ENCODE measurements at regions of chr3 and their contacts with region 1.

Region 1: DNA sequence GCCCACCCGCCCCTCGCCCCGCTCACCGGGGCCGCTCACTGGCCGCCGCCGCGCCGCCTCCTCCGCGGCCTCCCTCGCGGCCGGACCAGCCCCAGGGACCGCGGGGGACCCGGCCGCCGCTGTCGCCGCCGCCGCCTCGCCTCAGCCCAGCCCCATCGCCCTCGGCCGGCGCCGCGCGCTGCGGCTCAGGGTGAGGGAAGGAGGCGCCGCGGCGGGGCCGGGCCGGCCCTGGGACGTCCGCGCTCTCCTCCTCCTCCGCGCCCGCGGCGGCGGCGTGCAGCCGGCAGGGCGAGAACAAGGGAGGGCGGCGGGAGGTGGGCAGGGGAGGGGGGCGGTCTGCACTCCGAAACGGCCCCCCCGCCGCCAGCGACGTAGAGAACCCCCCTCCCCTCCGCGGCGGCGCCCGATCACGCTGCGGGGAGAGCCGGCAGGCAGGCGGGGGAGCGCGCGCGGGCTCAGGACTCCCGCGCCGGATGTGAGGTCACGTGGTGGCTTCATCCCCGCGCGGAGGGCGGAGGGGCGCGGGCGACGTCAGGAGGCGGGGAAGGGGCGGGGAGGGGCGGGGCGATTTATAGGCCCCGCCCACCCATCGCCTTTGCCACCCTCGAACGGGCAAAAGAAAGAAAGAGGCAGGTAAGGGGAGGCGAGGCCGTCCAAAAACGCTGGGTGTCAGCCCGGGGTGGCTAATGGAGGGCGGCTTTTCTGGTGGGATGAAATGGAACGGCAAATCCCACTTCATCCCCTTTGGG is at the start of gene ATP13A3:
- DNase-seq: peak; percentile 95
- ATAC-seq: peak; percentile 81
- H3K4me3 ChIP-seq: peak within 1 kb of the TSS; percentile 63 to 92 (median 77)
- H3K4me3 Mint-ChIP-seq: peak within 1 kb of the TSS; percentile 93
- H3K27ac ChIP-seq: peak within 1 kb of the TSS; percentile 66 to 71
- H3K27ac Mint-ChIP-seq: peak within 1 kb of the TSS; percentile 92
- H3K4me1 ChIP-seq: peaks cover 32 to 50% of the 10 kb centered on the region in 2 donors
- H3K4me1 Mint-ChIP-seq: peaks cover 55% of the 10 kb centered on the region
- H3K27me3 ChIP-seq: no peaks in the 10 kb centered on the region
- H3K27me3 Mint-ChIP-seq: no peaks in the 10 kb centered on the region
- CTCF ChIP-seq: peak; percentile 5
- total RNA-seq, gene ATP13A3: 61.0 and 61.1 TPM in 2 replicates

Region 2: DNA sequence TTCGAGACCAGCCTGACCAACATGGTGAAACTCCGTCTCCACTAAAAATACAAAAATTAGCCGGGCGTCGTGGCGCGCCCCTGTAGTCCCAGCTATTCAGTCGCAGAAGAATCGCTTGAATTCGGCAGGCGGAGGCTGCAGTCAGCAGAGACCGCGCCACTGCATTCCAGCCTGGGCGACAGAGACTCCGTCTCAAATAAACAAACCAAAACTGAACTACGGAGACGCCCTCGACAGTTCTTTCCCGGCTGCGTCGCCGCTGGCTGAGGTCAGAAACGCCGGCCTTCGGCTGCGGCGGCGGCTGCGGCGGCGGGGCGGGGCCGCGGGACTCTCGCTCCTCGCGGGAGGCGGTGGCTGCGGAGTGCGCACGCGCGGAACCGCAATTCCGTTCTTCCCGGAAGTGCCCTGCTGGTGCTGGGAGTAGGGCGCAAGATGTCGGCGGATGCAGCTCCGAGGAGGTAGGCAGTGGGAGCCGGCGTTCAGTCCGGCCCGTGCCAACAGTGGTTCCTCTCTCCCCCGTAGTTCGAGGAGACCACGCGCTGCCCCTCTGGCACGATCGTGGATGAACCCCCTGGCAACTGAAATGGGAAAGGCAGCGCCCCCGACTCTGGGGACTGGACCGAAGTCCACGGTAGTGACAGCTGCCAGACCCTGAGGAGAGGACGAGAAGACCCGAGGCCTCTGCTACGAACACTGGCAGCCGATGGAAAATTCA is 97.0 kb after region 1 on chr3:
- CTCF ChIA-PET with region 1: no interaction called
- POLR2A ChIA-PET with region 1: interaction called, 5 read pairs
- intact Hi-C with region 1: loop called (anchors 1 kb)
- DNase-seq: peak; percentile 95
- ATAC-seq: peak; percentile 93
- H3K4me3 ChIP-seq: peak overlapping the region; percentile 81 to 98 (median 91)
- H3K4me3 Mint-ChIP-seq: peak overlapping the region; percentile 97
- H3K27ac ChIP-seq: peak overlapping the region; percentile 86 to 88
- H3K27ac Mint-ChIP-seq: peak overlapping the region; percentile 98
- H3K4me1 ChIP-seq: peaks cover 9% of the 10 kb centered on the region in 2 donors
- H3K4me1 Mint-ChIP-seq: peaks cover 21% of the 10 kb centered on the region
- H3K27me3 ChIP-seq: no peaks in the 10 kb centered on the region
- H3K27me3 Mint-ChIP-seq: no peaks in the 10 kb centered on the region
- CTCF ChIP-seq: no peak

Region 3: GRCh38 chr3:194632809-194633348 is 146.2 kb after region 1 on chr3:
- CTCF ChIA-PET with region 1: no interaction called
- POLR2A ChIA-PET with region 1: no interaction called
- intact Hi-C with region 1: loop called (anchors 2 kb)
- DNase-seq: no peak
- ATAC-seq: peak; percentile 51
- H3K4me3 ChIP-seq: peak overlapping the region; percentile 30 to 79 (median 58)
- H3K4me3 Mint-ChIP-seq: peak overlapping the region; percentile 86
- H3K27ac ChIP-seq: no peak overlapping the region
- H3K27ac Mint-ChIP-seq: peak overlapping the region; percentile 56
- H3K4me1 ChIP-seq: peaks cover 4 to 5% of the 10 kb centered on the region in 2 donors
- H3K4me1 Mint-ChIP-seq: peaks cover 9% of the 10 kb centered on the region
- H3K27me3 ChIP-seq: no peaks in the 10 kb centered on the region
- H3K27me3 Mint-ChIP-seq: no peaks in the 10 kb centered on the region
- CTCF ChIP-seq: no peak

Region 4: DNA sequence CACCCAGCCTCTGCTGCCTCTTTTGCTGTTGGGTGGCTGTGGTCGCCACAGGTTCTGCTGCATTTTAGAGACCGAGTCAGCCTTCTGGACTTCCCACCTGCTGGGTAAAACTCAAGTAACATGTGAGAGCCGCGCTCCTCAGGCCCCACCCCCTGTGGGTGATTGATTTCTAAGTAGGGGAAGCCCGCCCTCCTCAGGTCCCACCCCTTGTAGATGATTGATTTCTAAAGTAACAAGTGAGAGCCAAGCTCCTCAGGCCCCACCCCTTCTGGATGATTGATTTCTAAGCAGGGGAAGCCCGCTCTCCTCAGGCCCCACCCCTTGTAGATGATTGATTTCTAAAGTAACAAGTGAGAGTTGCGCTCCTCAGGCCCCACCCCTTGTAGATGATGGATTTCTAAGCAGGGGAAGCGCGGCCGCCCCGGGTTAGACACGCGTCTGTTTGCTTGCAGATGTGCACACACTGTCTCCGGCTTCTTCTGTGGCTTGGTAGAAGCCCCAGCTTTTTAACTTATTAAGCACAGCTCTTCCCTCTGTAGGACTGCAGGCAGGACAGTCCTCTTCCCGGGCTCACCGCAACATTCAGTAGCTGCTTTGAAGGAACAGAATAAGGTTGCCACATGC is 282.4 kb after region 1 on chr3:
- CTCF ChIA-PET with region 1: no interaction called
- POLR2A ChIA-PET with region 1: no interaction called
- intact Hi-C with region 1: loop called (anchors 2 kb)
- DNase-seq: peak; percentile 97
- ATAC-seq: peak; percentile 97
- H3K4me3 ChIP-seq: peak overlapping the region; percentile 40 to 75 (median 55)
- H3K4me3 Mint-ChIP-seq: peak overlapping the region; percentile 85
- H3K27ac ChIP-seq: peak overlapping the region; percentile 52 to 77
- H3K27ac Mint-ChIP-seq: peak overlapping the region; percentile 83
- H3K4me1 ChIP-seq: peaks cover 19 to 29% of the 10 kb centered on the region in 2 donors
- H3K4me1 Mint-ChIP-seq: peaks cover 29% of the 10 kb centered on the region
- H3K27me3 ChIP-seq: peaks cover 0 to 2% (median 0%) of the 10 kb centered on the region in 4 experiments
- H3K27me3 Mint-ChIP-seq: peaks cover 14% of the 10 kb centered on the region
- CTCF ChIP-seq: no peak

Region 5: GRCh38 chr3:195259475-195260279 is 773.0 kb after region 1 on chr3:
- CTCF ChIA-PET with region 1: no interaction called
- POLR2A ChIA-PET with region 1: no interaction called
- intact Hi-C with region 1: loop called (anchors 2 kb)
- DNase-seq: peak; percentile 95
- ATAC-seq: peak; percentile 90
- H3K4me3 ChIP-seq: peak overlapping the region in 4 of 5 experiments; percentile 63 to 89 (median 72)
- H3K4me3 Mint-ChIP-seq: peak overlapping the region; percentile 74
- H3K27ac ChIP-seq: peak overlapping the region; percentile 78 to 87
- H3K27ac Mint-ChIP-seq: peak overlapping the region; percentile 92
- H3K4me1 ChIP-seq: peaks cover 16 to 23% of the 10 kb centered on the region in 2 donors
- H3K4me1 Mint-ChIP-seq: peaks cover 19% of the 10 kb centered on the region
- H3K27me3 ChIP-seq: no peaks in the 10 kb centered on the region
- H3K27me3 Mint-ChIP-seq: no peaks in the 10 kb centered on the region
- CTCF ChIP-seq: peak; percentile 73

Region 6: GRCh38 chr3:195442573-195443390 is 956.1 kb after region 1 on chr3 and contains the start of gene ACAP2:
- CTCF ChIA-PET with region 1: no interaction called
- POLR2A ChIA-PET with region 1: no interaction called
- intact Hi-C with region 1: loop called (anchors 5 kb)
- DNase-seq: peak; percentile 99
- ATAC-seq: peak; percentile 87
- H3K4me3 ChIP-seq: peak within 1 kb of the TSS; percentile 69 to 92 (median 84)
- H3K4me3 Mint-ChIP-seq: peak within 1 kb of the TSS; percentile 94
- H3K27ac ChIP-seq: peak within 1 kb of the TSS; percentile 83 to 88
- H3K27ac Mint-ChIP-seq: peak within 1 kb of the TSS; percentile 97
- H3K4me1 ChIP-seq: peaks cover 29 to 33% of the 10 kb centered on the region in 2 donors
- H3K4me1 Mint-ChIP-seq: peaks cover 40% of the 10 kb centered on the region
- H3K27me3 ChIP-seq: no peaks in the 10 kb centered on the region
- H3K27me3 Mint-ChIP-seq: no peaks in the 10 kb centered on the region
- CTCF ChIP-seq: no peak
- total RNA-seq, gene ACAP2: 108 and 113 TPM in 2 replicates

Region 7: DNA sequence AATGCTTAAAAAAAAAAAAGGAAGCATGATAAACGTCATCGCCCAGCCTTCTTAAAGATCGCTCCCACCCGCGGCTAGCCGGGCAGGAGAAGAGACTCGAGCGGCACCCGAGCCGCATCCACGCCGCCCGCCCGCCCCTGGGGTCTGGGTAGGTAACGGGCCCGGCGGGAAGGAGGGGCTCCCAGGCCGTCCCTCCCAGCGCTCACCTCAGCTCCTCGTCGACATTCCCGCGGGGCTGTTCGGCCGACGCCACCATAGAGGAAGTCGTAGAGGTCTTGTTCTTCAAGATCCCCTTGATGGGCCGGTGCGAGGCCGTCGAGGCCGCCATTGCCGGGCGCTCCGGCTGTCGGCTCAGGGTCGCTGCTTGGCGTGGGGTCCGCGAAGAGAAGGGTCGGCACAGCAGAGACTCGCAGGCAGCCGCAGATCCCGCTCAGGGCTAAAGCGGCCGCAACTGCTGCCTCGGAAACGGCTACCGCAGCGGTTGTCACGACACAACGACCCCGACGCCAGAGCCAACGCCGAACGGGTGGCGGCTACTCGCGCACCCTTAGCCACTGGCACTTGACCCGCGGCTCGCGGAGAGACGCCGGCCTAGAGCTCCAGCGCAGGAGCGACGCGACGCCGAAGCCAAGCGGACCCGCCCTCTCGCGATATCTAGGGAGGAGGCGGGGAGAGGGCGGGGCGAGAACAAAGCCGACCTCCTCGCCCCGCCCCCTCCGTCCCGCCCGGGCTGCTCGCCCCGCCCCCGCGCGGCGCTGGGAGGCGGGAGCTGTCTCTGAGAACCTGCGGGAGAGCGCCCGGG is 1056.2 kb after region 1 on chr3 and contains the start of gene PPP1R2:
- CTCF ChIA-PET with region 1: no interaction called
- POLR2A ChIA-PET with region 1: interaction called, 4 read pairs
- intact Hi-C with region 1: loop called (anchors 2 kb)
- DNase-seq: peak; percentile 95
- ATAC-seq: peak; percentile 90
- H3K4me3 ChIP-seq: peak within 1 kb of the TSS; percentile 75 to 95 (median 93)
- H3K4me3 Mint-ChIP-seq: peak within 1 kb of the TSS; percentile 97
- H3K27ac ChIP-seq: peak within 1 kb of the TSS; percentile 96 to 98
- H3K27ac Mint-ChIP-seq: peak within 1 kb of the TSS; percentile 96
- H3K4me1 ChIP-seq: peaks cover 58 to 65% of the 10 kb centered on the region in 2 donors
- H3K4me1 Mint-ChIP-seq: peaks cover 77% of the 10 kb centered on the region
- H3K27me3 ChIP-seq: no peaks in the 10 kb centered on the region
- H3K27me3 Mint-ChIP-seq: no peaks in the 10 kb centered on the region
- CTCF ChIP-seq: no peak
- total RNA-seq, gene PPP1R2: 73.8 and 81.8 TPM in 2 replicates